Panc1 (cell line): ENCODE measurements at regions of chr9 and their contacts with region 1.

Region 1: DNA sequence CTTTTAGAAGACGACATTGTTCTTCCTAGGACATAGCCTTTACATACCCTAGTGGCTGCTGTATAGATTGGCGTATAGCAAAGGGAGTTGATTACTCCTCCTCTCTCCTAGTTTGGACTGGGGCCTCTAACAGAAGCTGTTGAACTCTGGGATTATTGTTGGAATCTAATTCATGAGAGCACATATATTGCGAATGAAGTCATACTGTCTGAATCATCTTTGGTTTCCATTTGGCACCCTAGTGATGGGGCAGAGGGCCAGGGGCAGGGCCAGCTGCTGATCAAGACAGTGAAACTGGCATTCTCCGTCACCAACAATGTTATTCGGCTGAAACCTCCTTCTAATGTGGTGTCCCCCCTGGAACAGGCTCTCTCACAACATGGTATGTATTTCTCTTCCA is 40.3 kb downstream of the NUP188 start:
- DNase-seq: no peak
- ATAC-seq: no peak
- H3K4me3 ChIP-seq: no peak overlapping the region
- H3K27ac ChIP-seq: no peak overlapping the region
- H3K4me1 ChIP-seq: no peaks in the 10 kb centered on the region
- H3K27me3 ChIP-seq: no peaks in the 10 kb centered on the region
- CTCF ChIP-seq: no peak

Region 2: DNA sequence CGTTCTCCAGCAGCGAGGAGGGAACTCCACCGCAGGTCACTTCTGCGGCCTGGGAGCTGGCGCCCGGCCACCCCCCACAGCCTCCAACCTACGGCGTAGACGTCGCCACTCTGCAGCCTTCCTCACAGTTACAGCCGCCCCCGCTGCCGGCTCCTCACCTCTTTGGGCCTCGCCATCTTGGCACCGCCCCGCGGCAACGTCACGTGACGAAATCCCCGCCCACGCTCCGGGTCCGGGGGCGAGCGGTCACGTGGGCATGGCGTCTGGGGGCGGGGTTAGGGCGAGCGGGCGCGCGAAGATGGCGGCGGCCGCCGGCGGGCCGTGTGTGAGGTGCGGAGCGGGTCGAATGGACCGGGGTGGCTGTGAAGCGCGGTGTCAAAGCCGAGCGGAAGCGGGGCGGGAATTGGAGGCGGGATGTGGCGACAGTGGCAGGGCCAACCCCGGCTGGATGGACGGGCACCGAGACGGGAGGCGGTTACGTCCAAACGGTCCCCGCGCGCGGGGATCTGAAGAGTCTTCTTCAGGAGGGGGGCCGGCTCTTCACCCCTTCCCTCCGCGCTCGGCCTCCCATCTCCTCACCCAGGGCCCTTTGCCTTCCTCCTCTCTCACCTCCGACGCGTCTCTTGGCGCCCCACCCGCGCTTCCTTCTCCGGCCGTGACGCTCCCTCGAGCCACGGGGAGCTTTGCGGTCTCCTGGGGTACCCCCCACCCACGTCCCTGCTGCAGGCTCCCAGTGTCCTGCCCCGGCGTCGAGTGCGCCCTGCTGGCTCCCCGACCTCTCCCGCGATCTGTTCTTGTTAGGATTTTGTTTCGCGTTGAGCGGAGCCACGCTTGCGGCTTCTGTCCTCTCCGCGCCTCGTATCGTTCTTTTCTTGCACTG is 40.1 kb before region 1 on chr9 and contains the starts of genes DOLK and NUP188:
- CTCF ChIA-PET with region 1: no interaction called
- POLR2A ChIA-PET with region 1: interaction called, 20 read pairs
- in situ Hi-C with region 1: no loop called
- intact Hi-C with region 1: no loop called
- DNase-seq: no peak
- ATAC-seq: peak; percentile 92
- H3K4me3 ChIP-seq: peak within 1 kb of the TSS; percentile 87 to 91
- H3K27ac ChIP-seq: peak within 1 kb of the TSS; percentile 82
- H3K4me1 ChIP-seq: peaks cover 3% of the 10 kb centered on the region
- H3K27me3 ChIP-seq: no peaks in the 10 kb centered on the region
- CTCF ChIP-seq: no peak
- total RNA-seq, gene DOLK: 20.0 TPM
- total RNA-seq, gene NUP188: 69.9 TPM

Region 3: GRCh38 chr9:129139993-129140396 is 152.2 kb after region 1 on chr9:
- CTCF ChIA-PET with region 1: no interaction called
- POLR2A ChIA-PET with region 1: no interaction called
- in situ Hi-C with region 1: no loop called
- intact Hi-C with region 1: no loop called
- DNase-seq: no peak
- ATAC-seq: peak; percentile 69
- H3K4me3 ChIP-seq: peak overlapping the region; percentile 19 to 42
- H3K27ac ChIP-seq: peak overlapping the region; percentile 95
- H3K4me1 ChIP-seq: peaks cover 28% of the 10 kb centered on the region
- H3K27me3 ChIP-seq: no peaks in the 10 kb centered on the region
- CTCF ChIP-seq: no peak